ENCODE measurements at regions of chr18 and their contacts with region 1.

Region 1: GRCh38 chr18:22020127-22020866 is 149.1 kb upstream of the GATA6 start:
- DNase-seq: peak; percentile 80
- ATAC-seq: peak; percentile 97
- H3K4me3 ChIP-seq: peak overlapping the region; percentile 18 to 64 (median 48); a peak in 5 of 6 replicates
- H3K27ac ChIP-seq: peak overlapping the region; percentile 62
- H3K4me1 ChIP-seq: peaks cover 56% of the 10 kb centered on the region
- H3K27me3 ChIP-seq: no peaks in the 10 kb centered on the region
- CTCF ChIP-seq: no peak
- EP300 ChIP-seq: no peak
- POLR2A ChIP-seq: no peak
- RAD21 ChIP-seq: no peak

Region 2: GRCh38 chr18:21826196-21826595 is 194.1 kb before region 1 on chr18:
- CTCF ChIA-PET with region 1: no interaction called
- POLR2A ChIA-PET with region 1: no interaction called
- in situ Hi-C with region 1: no loop called
- intact Hi-C with region 1: no loop called
- DNase-seq: no peak
- ATAC-seq: no peak
- H3K4me3 ChIP-seq: no peak overlapping the region
- H3K27ac ChIP-seq: no peak overlapping the region
- H3K4me1 ChIP-seq: peaks cover 7% of the 10 kb centered on the region
- H3K27me3 ChIP-seq: no peaks in the 10 kb centered on the region
- CTCF ChIP-seq: no peak
- EP300 ChIP-seq: no peak
- POLR2A ChIP-seq: no peak
- RAD21 ChIP-seq: no peak

Region 3: DNA sequence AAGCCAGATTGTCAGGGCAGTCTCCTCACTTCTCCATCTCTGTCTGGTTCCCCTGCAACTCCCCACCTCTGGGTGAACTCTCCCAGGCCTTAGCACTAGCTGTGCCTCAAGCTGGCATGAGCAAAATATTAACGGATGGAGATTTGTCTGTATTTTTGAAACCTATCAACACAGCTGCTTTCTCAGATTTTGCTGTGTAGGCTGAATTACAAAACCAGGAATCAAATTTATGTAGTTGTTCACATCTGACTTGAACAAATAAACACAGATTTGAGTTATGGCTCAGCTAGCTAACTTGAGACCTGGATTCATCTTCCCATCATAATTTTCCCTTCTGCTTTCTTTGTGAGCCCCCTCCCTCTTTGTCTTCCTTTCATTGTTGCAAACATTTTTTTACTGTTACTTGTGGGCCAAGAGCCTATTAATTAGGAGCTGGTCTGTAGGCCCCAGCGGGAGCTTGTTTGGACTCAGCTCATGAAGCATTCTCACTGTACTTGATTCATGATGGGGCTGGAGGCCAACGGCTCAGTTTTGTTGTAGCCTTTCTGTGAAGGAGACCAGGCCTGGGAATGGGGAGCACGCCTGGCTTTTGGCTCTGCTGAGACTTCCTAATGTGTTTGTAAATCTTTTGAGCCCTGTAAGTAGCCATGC is 15.0 kb before region 1 on chr18:
- CTCF ChIA-PET with region 1: no interaction called
- POLR2A ChIA-PET with region 1: interaction called, 8 read pairs
- in situ Hi-C with region 1: no loop called
- intact Hi-C with region 1: loop called (anchors 2 kb)
- DNase-seq: no peak
- ATAC-seq: no peak
- H3K4me3 ChIP-seq: no peak overlapping the region
- H3K27ac ChIP-seq: no peak overlapping the region
- H3K4me1 ChIP-seq: peaks cover 49% of the 10 kb centered on the region
- H3K27me3 ChIP-seq: no peaks in the 10 kb centered on the region
- CTCF ChIP-seq: no peak
- EP300 ChIP-seq: no peak
- POLR2A ChIP-seq: no peak
- RAD21 ChIP-seq: no peak